ENCODE measurements at regions of chr22 and their contacts with region 1.

Region 1: GRCh38 chr22:25540166-25540907 is 24.1 kb upstream of the GRK3 start:
- DNase-seq: no peak
- ATAC-seq: no peak
- H3K4me3 Mint-ChIP-seq: no peak overlapping the region
- H3K27ac Mint-ChIP-seq: no peak overlapping the region
- H3K4me1 Mint-ChIP-seq: peaks cover 15% of the 10 kb centered on the region
- H3K27me3 Mint-ChIP-seq: no peaks in the 10 kb centered on the region
- CTCF ChIP-seq: no peak

Region 2: DNA sequence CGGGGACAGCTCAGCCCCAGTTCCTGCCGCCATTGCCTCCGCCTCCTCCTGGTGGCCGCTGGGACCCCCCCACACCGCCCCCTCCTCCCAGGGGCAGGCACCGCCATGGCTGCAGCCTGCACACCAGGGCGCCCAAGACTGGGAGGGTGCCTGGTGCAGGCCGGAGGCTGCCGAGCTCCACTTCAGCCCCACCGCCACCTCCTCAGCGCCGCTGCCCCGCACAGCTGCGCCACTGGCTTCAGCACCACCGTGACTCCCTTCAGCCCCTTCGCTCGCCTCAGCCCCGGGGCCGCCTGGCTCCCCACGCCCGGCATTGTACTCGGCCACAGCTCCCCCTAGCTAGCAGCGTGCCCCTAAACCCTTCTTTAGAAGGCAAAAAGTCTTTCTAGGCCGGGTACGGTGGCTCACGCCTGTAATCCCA is 189.8 kb before region 1 on chr22:
- CTCF ChIA-PET with region 1: no interaction called
- POLR2A ChIA-PET with region 1: no interaction called
- intact Hi-C with region 1: no loop called
- DNase-seq: peak; percentile 12
- ATAC-seq: no peak
- H3K4me3 Mint-ChIP-seq: no peak overlapping the region
- H3K27ac Mint-ChIP-seq: no peak overlapping the region
- H3K4me1 Mint-ChIP-seq: no peaks in the 10 kb centered on the region
- H3K27me3 Mint-ChIP-seq: no peaks in the 10 kb centered on the region
- CTCF ChIP-seq: no peak

Region 3: GRCh38 chr22:25582946-25583345 is 42.6 kb after region 1 on chr22:
- CTCF ChIA-PET with region 1: interaction called, 5 read pairs
- POLR2A ChIA-PET with region 1: interaction called, 3 read pairs
- intact Hi-C with region 1: loop called (anchors 5 kb)
- DNase-seq: no peak
- ATAC-seq: no peak
- H3K4me3 Mint-ChIP-seq: peak overlapping the region; percentile 16
- H3K27ac Mint-ChIP-seq: peak overlapping the region; percentile 42
- H3K4me1 Mint-ChIP-seq: peaks cover 78% of the 10 kb centered on the region
- H3K27me3 Mint-ChIP-seq: no peaks in the 10 kb centered on the region
- CTCF ChIP-seq: no peak

Region 4: GRCh38 chr22:25656724-25657123 is 116.4 kb after region 1 on chr22:
- CTCF ChIA-PET with region 1: interaction called, 11 read pairs
- POLR2A ChIA-PET with region 1: interaction called, 5 read pairs
- intact Hi-C with region 1: loop called (anchors 5 kb)
- DNase-seq: peak; percentile 23
- ATAC-seq: peak; percentile 99
- H3K4me3 Mint-ChIP-seq: peak overlapping the region; percentile 42
- H3K27ac Mint-ChIP-seq: peak overlapping the region; percentile 72
- H3K4me1 Mint-ChIP-seq: peaks cover 81% of the 10 kb centered on the region
- H3K27me3 Mint-ChIP-seq: no peaks in the 10 kb centered on the region
- CTCF ChIP-seq: no peak

Region 5: GRCh38 chr22:25666308-25666707 is 126.0 kb after region 1 on chr22:
- CTCF ChIA-PET with region 1: interaction called, 12 read pairs
- POLR2A ChIA-PET with region 1: no interaction called
- intact Hi-C with region 1: no loop called
- DNase-seq: no peak
- ATAC-seq: no peak
- H3K4me3 Mint-ChIP-seq: no peak overlapping the region
- H3K27ac Mint-ChIP-seq: no peak overlapping the region
- H3K4me1 Mint-ChIP-seq: peaks cover 15% of the 10 kb centered on the region
- H3K27me3 Mint-ChIP-seq: no peaks in the 10 kb centered on the region
- CTCF ChIP-seq: no peak

Region 6: DNA sequence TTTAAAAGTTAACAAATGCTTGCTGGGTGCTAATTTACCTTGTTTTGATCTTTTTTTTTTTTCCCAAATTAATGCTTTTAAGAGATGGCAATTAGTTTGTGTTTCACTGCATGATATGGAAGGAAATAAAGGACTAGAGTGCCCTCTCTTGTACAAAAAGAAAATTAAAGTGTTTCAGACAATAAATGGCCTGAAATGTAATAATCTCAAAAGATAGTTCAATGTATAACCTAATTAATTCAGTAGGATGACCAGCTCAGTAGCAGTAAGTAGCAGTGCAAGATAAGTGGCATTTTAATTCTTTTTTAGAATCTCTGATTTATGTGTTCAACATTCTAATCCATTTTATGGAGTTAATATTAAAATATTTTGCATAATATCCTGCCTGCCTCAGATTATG is 161.7 kb after region 1 on chr22:
- CTCF ChIA-PET with region 1: interaction called, 56 read pairs
- POLR2A ChIA-PET with region 1: interaction called, 4 read pairs
- intact Hi-C with region 1: loop called (anchors 1 kb)
- DNase-seq: no peak
- ATAC-seq: no peak
- H3K4me3 Mint-ChIP-seq: no peak overlapping the region
- H3K27ac Mint-ChIP-seq: no peak overlapping the region
- H3K4me1 Mint-ChIP-seq: peaks cover 9% of the 10 kb centered on the region
- H3K27me3 Mint-ChIP-seq: no peaks in the 10 kb centered on the region
- CTCF ChIP-seq: no peak

Measured in activated B cell treated with CpG ODN at 0.5 μM for 24 hours (primary cell).